T-cell (primary cell): ENCODE measurements at regions of chr14 and their contacts with region 1.

Region 1: GRCh38 chr14:49961270-49962222 is 68.7 kb downstream of the ARF6 start:
- DNase-seq: no peak
- ATAC-seq: no peak
- H3K4me3 ChIP-seq: no peak overlapping the region
- H3K4me3 Mint-ChIP-seq: no peak overlapping the region
- H3K27ac ChIP-seq: no peak overlapping the region
- H3K27ac Mint-ChIP-seq: peak overlapping the region in 1 of 2 donors; percentile 23
- H3K4me1 ChIP-seq: peaks cover 5% of the 10 kb centered on the region in 2 experiments
- H3K4me1 Mint-ChIP-seq: peaks cover 23 to 38% (median 32%) of the 10 kb centered on the region in 3 donors
- H3K27me3 ChIP-seq: no peaks in the 10 kb centered on the region
- H3K27me3 Mint-ChIP-seq: no peaks in the 10 kb centered on the region

Region 2: DNA sequence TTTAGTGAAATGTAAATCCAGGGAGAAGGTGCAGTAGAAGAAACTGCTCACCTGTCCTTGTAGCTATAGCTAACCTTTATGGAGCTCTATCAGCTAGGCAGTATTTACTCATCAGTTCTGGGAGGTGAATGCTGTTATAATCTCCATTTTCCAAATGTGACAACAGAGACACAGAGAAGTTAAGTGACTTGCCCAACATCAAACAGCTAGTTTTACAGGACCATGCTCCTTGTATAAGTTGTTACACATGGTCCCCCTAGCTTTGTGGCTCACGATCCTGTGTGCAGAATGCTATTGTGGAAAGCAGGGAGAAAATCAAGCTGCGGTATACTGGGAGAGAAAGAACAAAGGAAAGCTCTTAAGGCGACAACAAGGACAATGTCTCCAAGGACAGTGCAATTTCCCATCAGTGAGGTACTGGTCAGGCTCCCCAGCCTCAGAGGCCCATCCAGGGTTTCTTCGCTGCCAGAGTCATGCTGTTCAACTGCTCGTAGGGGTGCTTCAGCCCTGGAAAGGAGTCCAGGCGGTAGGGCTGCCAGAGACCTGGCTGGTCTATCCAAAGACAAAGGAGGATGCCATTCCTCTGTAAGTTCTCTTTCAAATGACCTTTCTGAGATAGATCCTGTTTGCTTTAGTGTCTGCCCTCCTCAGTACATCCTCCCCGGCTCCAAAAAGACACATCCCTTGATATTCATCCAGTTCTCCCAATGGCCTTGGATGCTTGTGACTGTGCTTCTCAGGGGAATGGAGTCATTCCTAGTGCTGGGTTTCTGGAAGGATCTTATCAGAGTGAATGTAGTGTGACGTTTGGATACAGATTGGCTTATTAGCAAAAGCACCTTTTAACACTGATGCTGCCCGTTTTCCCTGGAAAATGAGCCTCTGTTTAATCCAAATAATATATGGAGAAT is 26.8 kb after region 1 on chr14:
- CTCF ChIA-PET with region 1: interaction called in 1 of 2 experiments, 10 read pairs
- POLR2A ChIA-PET with region 1: no interaction called
- DNase-seq: no peak
- ATAC-seq: no peak
- H3K4me3 ChIP-seq: no peak overlapping the region
- H3K4me3 Mint-ChIP-seq: no peak overlapping the region
- H3K27ac ChIP-seq: no peak overlapping the region
- H3K27ac Mint-ChIP-seq: peak overlapping the region in 1 of 2 donors; percentile 16
- H3K4me1 ChIP-seq: peaks cover 0 to 5% of the 10 kb centered on the region in 2 experiments
- H3K4me1 Mint-ChIP-seq: peaks cover 14 to 55% (median 30%) of the 10 kb centered on the region in 3 donors
- H3K27me3 ChIP-seq: no peaks in the 10 kb centered on the region
- H3K27me3 Mint-ChIP-seq: no peaks in the 10 kb centered on the region

Region 3: DNA sequence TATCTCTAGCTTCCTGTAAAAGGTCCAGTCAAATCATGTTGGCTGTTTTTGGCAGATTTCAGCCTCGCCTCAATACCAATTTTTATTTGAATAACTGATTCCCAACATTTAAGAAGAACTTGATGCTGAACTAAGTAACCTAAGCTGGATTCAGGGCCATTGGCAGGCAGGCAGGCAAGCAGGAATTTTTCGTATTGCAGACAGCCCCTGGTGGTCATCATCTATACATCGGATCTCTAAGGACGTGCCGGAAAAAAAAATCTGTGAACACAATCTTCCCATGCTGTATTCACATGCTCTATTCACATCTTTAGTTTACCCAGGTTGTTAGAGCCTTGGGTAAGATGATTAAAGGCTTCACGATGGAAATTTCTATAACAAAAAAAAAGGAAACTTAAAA is 147.8 kb after region 1 on chr14:
- CTCF ChIA-PET with region 1: no interaction called
- POLR2A ChIA-PET with region 1: interaction called in 1 of 2 experiments, 12 read pairs
- DNase-seq: no peak
- ATAC-seq: no peak
- H3K4me3 ChIP-seq: no peak overlapping the region
- H3K4me3 Mint-ChIP-seq: no peak overlapping the region
- H3K27ac ChIP-seq: no peak overlapping the region
- H3K27ac Mint-ChIP-seq: peak overlapping the region in 1 of 2 donors; percentile 68
- H3K4me1 ChIP-seq: peaks cover 0 to 3% of the 10 kb centered on the region in 2 experiments
- H3K4me1 Mint-ChIP-seq: peaks cover 10 to 27% (median 25%) of the 10 kb centered on the region in 3 donors
- H3K27me3 ChIP-seq: no peaks in the 10 kb centered on the region
- H3K27me3 Mint-ChIP-seq: no peaks in the 10 kb centered on the region